ENCODE measurements at regions of chr1 and their contacts with region 1.

Region 1: DNA sequence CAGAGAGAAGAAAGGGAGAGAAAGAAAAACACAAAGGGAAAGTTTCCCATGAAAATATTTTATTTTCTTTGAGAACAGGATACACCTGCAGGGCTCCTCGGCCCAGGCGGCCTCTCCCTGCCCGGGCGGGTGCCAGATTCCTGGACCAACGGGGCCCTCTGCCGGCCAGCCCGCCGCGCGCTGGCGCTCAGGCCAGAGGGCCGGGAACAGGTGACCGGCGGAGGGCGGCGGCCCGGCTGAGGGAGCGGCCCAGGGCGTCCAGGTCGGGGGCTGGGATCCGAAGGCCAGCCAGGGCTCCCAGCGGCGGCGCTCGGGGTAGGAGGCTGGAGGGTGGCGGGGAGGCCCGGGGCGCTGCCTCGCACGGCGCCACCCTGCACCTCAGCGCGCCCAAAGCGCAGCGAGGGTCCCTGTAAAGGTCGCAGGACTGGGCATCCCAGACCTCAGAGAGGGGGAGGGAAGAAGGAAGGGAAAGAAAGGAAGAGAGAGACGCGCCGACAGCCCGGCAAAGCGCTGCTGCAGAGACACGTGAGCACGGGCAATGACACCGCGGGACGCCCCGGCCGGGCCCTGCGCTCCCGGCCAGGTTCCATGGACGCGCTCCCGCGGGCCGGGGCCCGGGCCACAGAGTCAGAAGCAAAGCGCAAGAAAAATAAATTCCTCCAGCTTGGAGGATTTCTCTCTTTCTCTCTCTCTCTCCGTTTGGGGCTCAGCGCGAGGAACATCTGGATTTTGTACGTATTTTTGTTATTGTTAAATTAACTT is 927 bp downstream of the WNT9A start:
- DNase-seq: peak; percentile 71 to 90 (median 89)
- ATAC-seq: peak; percentile 80 to 81
- H3K4me3 ChIP-seq: peak overlapping the region; percentile 57
- H3K27ac ChIP-seq: no peak overlapping the region
- H3K4me1 ChIP-seq: no peaks in the 10 kb centered on the region
- H3K27me3 ChIP-seq: no peaks in the 10 kb centered on the region

Region 2: GRCh38 chr1:227482023-227482299 is 464.8 kb before region 1 on chr1:
- intact Hi-C with region 1: loop called (anchors 5 kb)
- DNase-seq: no peak
- ATAC-seq: no peak
- H3K4me3 ChIP-seq: no peak overlapping the region
- H3K27ac ChIP-seq: no peak overlapping the region
- H3K4me1 ChIP-seq: no peaks in the 10 kb centered on the region
- H3K27me3 ChIP-seq: no peaks in the 10 kb centered on the region

Region 3: DNA sequence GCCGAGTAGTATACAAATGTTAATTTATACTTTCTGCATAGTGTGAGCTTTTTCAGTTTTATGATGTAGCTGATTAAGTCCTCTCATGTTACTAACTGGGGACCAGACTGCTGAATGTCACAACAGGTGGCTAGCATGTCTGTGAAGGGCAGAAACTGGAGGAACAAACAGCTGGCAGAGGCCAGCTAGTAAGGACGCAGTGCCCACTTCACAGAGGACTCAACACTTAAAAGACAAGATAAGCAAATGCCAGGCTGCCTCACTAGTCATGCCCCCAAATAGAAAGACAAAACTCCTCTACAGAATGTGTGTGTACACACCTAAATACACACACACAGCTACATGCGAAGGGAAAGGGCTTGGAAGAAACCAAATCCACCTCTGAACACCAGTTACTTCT is 457.2 kb before region 1 on chr1:
- intact Hi-C with region 1: loop called (anchors 5 kb)
- DNase-seq: no peak
- ATAC-seq: peak; percentile 68 to 82
- H3K4me3 ChIP-seq: no peak overlapping the region
- H3K27ac ChIP-seq: no peak overlapping the region
- H3K4me1 ChIP-seq: no peaks in the 10 kb centered on the region
- H3K27me3 ChIP-seq: no peaks in the 10 kb centered on the region

Region 4: DNA sequence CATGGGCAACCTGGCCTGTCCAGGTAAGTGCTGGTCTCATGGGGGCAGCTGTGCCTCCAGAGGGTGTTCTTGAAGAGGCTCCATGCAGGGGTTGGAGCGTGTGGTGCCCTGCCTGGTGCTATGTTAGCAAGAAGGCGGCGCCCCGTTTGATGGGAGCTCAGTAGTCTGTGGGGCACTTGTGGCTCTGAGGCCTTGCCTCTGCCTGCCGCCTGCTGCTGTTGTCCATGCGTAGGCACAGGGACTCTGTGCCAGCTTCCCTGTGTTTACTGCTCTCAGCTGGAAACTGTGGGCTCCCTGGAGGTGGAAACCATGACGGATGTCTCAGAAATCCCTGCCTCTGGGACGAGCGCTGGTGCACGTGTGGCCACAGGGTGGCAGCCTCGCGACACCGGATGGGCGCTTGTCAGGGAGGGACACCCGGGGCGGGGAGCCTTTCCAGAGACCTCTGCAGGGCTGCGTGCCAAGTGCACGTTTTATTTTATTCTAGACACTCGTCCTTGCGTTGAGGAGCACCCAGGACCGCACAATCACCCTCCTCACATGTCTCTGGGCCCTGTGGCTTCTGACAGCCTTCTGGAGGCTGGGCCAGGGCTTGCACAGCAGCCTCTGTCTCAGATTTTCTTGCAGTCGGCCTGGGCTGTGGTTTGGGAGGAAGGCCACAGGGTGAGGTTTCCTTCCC is 184.4 kb before region 1 on chr1:
- intact Hi-C with region 1: loop called (anchors 2 to 5 kb)
- DNase-seq: peak; percentile 87 to 96 (median 95)
- ATAC-seq: peak; percentile 80 to 87
- H3K4me3 ChIP-seq: no peak overlapping the region
- H3K27ac ChIP-seq: no peak overlapping the region
- H3K4me1 ChIP-seq: no peaks in the 10 kb centered on the region
- H3K27me3 ChIP-seq: no peaks in the 10 kb centered on the region